Caco-2 (cell line): ENCODE measurements at regions of chr2 and their contacts with region 1.

Region 1: DNA sequence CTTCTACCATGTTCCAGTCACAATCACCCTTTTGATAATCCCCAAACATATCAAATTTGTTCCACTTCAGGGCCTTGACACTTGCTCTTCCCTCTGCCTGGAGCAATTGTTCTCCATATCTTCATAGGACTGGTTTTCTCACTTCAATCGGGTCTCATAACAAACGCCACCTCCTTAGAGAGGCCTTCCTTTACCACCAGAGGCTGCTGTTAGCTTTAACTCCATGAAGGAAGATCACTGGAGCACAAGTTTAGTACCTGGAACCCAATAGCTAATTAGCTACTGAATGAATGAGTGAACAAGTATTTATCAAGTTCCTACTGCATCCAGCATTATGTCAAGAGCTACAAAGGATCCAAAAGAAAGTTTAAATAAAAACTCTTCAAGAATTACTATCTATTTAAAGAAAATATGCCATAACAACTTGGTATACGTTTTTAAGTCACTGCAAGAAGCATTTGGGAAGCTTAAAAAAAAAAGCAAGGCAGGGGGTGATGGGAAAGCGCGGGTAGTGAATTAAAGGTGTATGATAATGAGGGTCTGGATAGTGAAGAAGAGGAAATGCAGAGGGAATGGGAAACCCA is 58.8 kb downstream of the BAZ2B start:
- DNase-seq: peak; percentile 40 to 57
- H3K4me3 ChIP-seq: no peak overlapping the region
- H3K4me3 Mint-ChIP-seq: no peak overlapping the region
- H3K27ac Mint-ChIP-seq: no peak overlapping the region
- H3K4me1 ChIP-seq: no peaks in the 10 kb centered on the region
- H3K4me1 Mint-ChIP-seq: peaks cover 10% of the 10 kb centered on the region
- H3K27me3 ChIP-seq: no peaks in the 10 kb centered on the region
- H3K27me3 Mint-ChIP-seq: no peaks in the 10 kb centered on the region
- CTCF ChIP-seq: peak; percentile 36 to 89

Region 2: DNA sequence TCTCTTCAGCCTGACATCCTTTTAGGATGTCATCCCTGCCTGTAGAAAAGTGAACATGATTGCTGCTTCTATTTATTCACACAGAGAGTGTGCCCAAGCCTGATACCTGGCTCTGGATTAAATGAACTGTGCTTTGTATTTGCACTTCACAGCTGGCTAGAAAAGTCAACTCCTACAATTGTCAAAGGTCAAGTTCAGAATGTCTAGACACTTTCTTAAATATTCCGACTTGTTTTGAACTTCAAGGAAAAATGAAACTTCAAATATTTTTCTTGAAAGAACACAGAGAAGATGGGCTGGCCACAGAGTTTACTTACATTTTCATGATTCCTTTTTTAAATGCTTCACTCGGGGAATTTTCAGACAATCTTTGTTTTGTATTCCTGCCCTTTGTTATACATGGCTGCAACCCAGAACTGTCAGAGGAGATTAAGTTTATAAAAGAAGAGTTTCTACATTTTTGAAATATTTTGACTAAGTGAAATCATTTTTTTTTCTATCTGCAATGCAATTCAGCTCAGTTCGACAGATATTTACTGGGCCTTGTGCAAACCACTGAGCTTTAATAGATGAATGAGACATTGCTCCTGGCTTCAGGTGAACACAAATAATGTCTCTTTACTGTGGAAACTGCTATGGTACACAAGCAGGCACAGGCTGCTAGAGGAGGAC is 728.9 kb before region 1 on chr2:
- CTCF ChIA-PET with region 1: no interaction called
- POLR2A ChIA-PET with region 1: no interaction called
- intact Hi-C with region 1: no loop called
- DNase-seq: no peak
- H3K4me3 ChIP-seq: no peak overlapping the region
- H3K4me3 Mint-ChIP-seq: peak overlapping the region; percentile 20
- H3K27ac Mint-ChIP-seq: peak overlapping the region; percentile 30
- H3K4me1 ChIP-seq: peaks cover 21% of the 10 kb centered on the region
- H3K4me1 Mint-ChIP-seq: peaks cover 22% of the 10 kb centered on the region
- H3K27me3 ChIP-seq: no peaks in the 10 kb centered on the region
- H3K27me3 Mint-ChIP-seq: no peaks in the 10 kb centered on the region
- CTCF ChIP-seq: no peak

Region 3: GRCh38 chr2:159623436-159623835 is 65.9 kb after region 1 on chr2:
- CTCF ChIA-PET with region 1: no interaction called
- POLR2A ChIA-PET with region 1: no interaction called
- intact Hi-C with region 1: no loop called
- DNase-seq: no peak
- H3K4me3 ChIP-seq: no peak overlapping the region
- H3K4me3 Mint-ChIP-seq: no peak overlapping the region
- H3K27ac Mint-ChIP-seq: no peak overlapping the region
- H3K4me1 ChIP-seq: no peaks in the 10 kb centered on the region
- H3K4me1 Mint-ChIP-seq: peaks cover 5% of the 10 kb centered on the region
- H3K27me3 ChIP-seq: no peaks in the 10 kb centered on the region
- H3K27me3 Mint-ChIP-seq: no peaks in the 10 kb centered on the region
- CTCF ChIP-seq: no peak

Region 4: GRCh38 chr2:159677654-159678053 is 120.1 kb after region 1 on chr2:
- CTCF ChIA-PET with region 1: interaction called, 8 read pairs
- POLR2A ChIA-PET with region 1: no interaction called
- intact Hi-C with region 1: loop called (anchors 1 kb)
- DNase-seq: no peak
- H3K4me3 ChIP-seq: no peak overlapping the region
- H3K4me3 Mint-ChIP-seq: no peak overlapping the region
- H3K27ac Mint-ChIP-seq: no peak overlapping the region
- H3K4me1 ChIP-seq: no peaks in the 10 kb centered on the region
- H3K4me1 Mint-ChIP-seq: no peaks in the 10 kb centered on the region
- H3K27me3 ChIP-seq: no peaks in the 10 kb centered on the region
- H3K27me3 Mint-ChIP-seq: no peaks in the 10 kb centered on the region
- CTCF ChIP-seq: peak; percentile 3 to 32

Region 5: GRCh38 chr2:159712143-159712928 is 154.8 kb after region 1 on chr2 and contains the start of gene MARCHF7:
- CTCF ChIA-PET with region 1: interaction called, 25 read pairs
- POLR2A ChIA-PET with region 1: interaction called, 32 read pairs
- intact Hi-C with region 1: loop called (anchors 1 kb)
- DNase-seq: peak; percentile 98 to 99
- H3K4me3 ChIP-seq: peak within 1 kb of the TSS; percentile 100
- H3K4me3 Mint-ChIP-seq: peak within 1 kb of the TSS; percentile 98
- H3K27ac Mint-ChIP-seq: peak within 1 kb of the TSS; percentile 99
- H3K4me1 ChIP-seq: peaks cover 19% of the 10 kb centered on the region
- H3K4me1 Mint-ChIP-seq: peaks cover 18% of the 10 kb centered on the region
- H3K27me3 ChIP-seq: no peaks in the 10 kb centered on the region
- H3K27me3 Mint-ChIP-seq: no peaks in the 10 kb centered on the region
- CTCF ChIP-seq: peak in 1 of 2 experiments; percentile 66
- total RNA-seq, gene MARCHF7: 82.6 and 90.7 TPM in 2 replicates

Region 6: GRCh38 chr2:159807183-159808031 is 249.9 kb after region 1 on chr2:
- CTCF ChIA-PET with region 1: interaction called, 4 read pairs
- POLR2A ChIA-PET with region 1: no interaction called
- intact Hi-C with region 1: loop called (anchors 1 kb)
- DNase-seq: peak; percentile 53 to 61
- H3K4me3 ChIP-seq: no peak overlapping the region
- H3K4me3 Mint-ChIP-seq: no peak overlapping the region
- H3K27ac Mint-ChIP-seq: no peak overlapping the region
- H3K4me1 ChIP-seq: no peaks in the 10 kb centered on the region
- H3K4me1 Mint-ChIP-seq: no peaks in the 10 kb centered on the region
- H3K27me3 ChIP-seq: no peaks in the 10 kb centered on the region
- H3K27me3 Mint-ChIP-seq: no peaks in the 10 kb centered on the region
- CTCF ChIP-seq: peak; percentile 78 to 82

Region 7: DNA sequence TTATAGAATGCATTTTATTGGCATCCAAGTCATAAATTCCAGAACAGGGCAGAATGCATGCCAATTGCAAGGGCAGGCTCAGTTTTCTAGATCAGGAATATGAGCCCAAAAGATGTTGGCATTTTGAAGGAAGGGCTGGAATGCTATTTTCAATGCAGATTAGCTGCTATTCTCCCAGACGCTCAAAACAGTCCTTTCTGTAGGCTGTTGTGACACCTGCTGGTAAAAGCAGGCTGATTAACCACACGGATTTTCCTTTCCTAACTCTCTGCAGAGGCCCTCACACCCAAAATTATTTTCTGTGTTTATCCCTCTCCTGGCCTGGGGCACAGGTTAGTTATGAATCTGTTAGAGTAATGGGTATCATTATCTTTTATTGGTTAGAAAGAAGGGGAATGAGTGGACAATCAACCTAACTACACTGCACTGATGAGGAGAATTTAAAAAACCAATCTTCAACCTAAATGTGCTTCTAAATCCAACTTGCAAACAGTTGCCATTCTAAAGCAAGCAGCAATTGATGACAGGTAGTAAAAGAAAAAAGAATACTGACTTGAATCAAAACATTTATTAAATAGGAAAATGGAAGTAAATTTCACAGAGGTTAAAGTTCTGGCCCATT is 410.8 kb after region 1 on chr2:
- CTCF ChIA-PET with region 1: interaction called, 3 read pairs
- POLR2A ChIA-PET with region 1: no interaction called
- intact Hi-C with region 1: loop called (anchors 1 kb)
- DNase-seq: peak; percentile 48 to 63
- H3K4me3 ChIP-seq: no peak overlapping the region
- H3K4me3 Mint-ChIP-seq: no peak overlapping the region
- H3K27ac Mint-ChIP-seq: no peak overlapping the region
- H3K4me1 ChIP-seq: no peaks in the 10 kb centered on the region
- H3K4me1 Mint-ChIP-seq: no peaks in the 10 kb centered on the region
- H3K27me3 ChIP-seq: no peaks in the 10 kb centered on the region
- H3K27me3 Mint-ChIP-seq: no peaks in the 10 kb centered on the region
- CTCF ChIP-seq: peak; percentile 67 to 71